MCF 10A (cell line): ENCODE measurements at regions of chr5 and their contacts with region 1.

Region 1: GRCh38 chr5:120055858-120056257 is 408.2 kb upstream of the PRR16 start:
- DNase-seq: peak; percentile 65
- H3K4me3 Mint-ChIP-seq: no peak overlapping the region
- H3K27ac Mint-ChIP-seq: no peak overlapping the region
- H3K4me1 Mint-ChIP-seq: no peaks in the 10 kb centered on the region
- H3K27me3 Mint-ChIP-seq: no peaks in the 10 kb centered on the region
- CTCF ChIP-seq: peak; percentile 43

Region 2: GRCh38 chr5:120327180-120327579 is 271.3 kb after region 1 on chr5:
- CTCF ChIA-PET with region 1: interaction called, 4 read pairs
- POLR2A ChIA-PET with region 1: no interaction called
- intact Hi-C with region 1: loop called (anchors 10 kb)
- DNase-seq: no peak
- H3K4me3 Mint-ChIP-seq: no peak overlapping the region
- H3K27ac Mint-ChIP-seq: no peak overlapping the region
- H3K4me1 Mint-ChIP-seq: no peaks in the 10 kb centered on the region
- H3K27me3 Mint-ChIP-seq: no peaks in the 10 kb centered on the region
- CTCF ChIP-seq: no peak